WTC11 (cell line): ENCODE measurements at regions of chr5 and their contacts with region 1.

Region 1: GRCh38 chr5:76175051-76175666 is 92.0 kb downstream of the SV2C start:
- DNase-seq: peak; percentile 72
- ATAC-seq: peak; percentile 85
- H3K4me3 Mint-ChIP-seq: no peak overlapping the region
- H3K27ac Mint-ChIP-seq: no peak overlapping the region
- H3K4me1 Mint-ChIP-seq: peaks cover 14% of the 10 kb centered on the region
- H3K27me3 Mint-ChIP-seq: no peaks in the 10 kb centered on the region
- CTCF ChIP-seq: peak; percentile 55

Region 2: DNA sequence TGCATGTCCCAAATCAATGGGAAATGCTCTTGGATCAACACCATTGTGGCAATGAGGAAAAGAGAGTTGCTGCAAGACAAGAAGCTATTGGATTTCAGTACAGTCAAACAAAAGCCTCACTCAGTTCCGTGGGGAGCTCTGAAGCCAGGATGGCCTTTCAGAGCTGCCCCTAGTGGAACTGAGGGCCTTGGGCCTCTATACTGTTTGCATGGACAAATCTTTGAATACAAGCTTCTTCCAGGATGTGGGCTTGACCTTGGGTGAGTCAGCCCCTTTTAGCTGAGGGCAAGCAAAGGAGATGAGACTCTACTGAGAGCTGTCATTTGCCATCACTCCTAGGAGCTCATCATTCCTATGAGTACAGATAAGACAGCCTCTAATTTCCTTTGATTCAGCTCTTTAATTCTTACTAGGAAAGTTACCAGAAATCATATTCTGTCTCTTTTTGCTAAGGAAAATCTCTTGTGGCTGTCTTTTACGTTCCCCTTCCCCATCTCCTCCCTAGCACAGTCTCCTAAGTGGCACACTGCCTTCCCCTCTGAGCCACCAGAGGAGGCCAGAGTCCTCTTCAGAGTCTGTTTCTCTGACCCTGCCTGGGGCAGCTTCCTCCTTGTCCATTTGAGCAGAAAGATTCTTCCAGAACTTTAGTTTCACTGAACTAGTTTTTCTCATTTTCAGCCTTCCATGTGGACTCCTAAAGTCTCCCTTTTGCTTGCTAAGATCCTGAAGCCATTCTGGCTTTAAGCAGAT is 289.1 kb before region 1 on chr5:
- CTCF ChIA-PET with region 1: interaction called, 41 read pairs
- POLR2A ChIA-PET with region 1: no interaction called
- DNase-seq: peak; percentile 34
- ATAC-seq: peak; percentile 94
- H3K4me3 Mint-ChIP-seq: no peak overlapping the region
- H3K27ac Mint-ChIP-seq: 0 out of 2 replicates have a peak overlapping the region, but pooled peaks have one; percentile 2
- H3K4me1 Mint-ChIP-seq: 0 out of 2 replicates have a peak, but pooled peaks cover 4% of the 10 kb centered on the region
- H3K27me3 Mint-ChIP-seq: no peaks in the 10 kb centered on the region
- CTCF ChIP-seq: no peak

Region 3: DNA sequence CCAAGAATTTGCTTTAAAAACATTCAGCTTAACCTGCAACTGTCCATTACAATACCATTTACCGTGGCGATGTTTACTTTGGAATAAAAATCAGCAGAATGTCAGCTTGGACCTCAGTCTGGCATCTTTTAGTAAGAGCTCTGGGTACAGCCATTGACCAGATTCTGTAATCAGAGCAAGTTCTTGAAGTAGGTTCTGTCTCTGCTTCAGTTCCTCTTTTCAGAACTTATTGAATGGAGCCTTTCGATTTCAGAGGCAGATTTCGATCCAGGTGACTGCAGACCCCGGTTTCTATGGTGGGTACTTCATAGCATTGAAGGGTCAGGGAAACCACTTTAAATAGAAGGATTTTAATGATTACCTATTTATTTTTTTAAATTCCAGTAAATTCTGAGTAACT is 145.4 kb before region 1 on chr5:
- CTCF ChIA-PET with region 1: no interaction called
- POLR2A ChIA-PET with region 1: no interaction called
- DNase-seq: no peak
- ATAC-seq: no peak
- H3K4me3 Mint-ChIP-seq: no peak overlapping the region
- H3K27ac Mint-ChIP-seq: no peak overlapping the region
- H3K4me1 Mint-ChIP-seq: no peaks in the 10 kb centered on the region
- H3K27me3 Mint-ChIP-seq: no peaks in the 10 kb centered on the region
- CTCF ChIP-seq: no peak

Region 4: DNA sequence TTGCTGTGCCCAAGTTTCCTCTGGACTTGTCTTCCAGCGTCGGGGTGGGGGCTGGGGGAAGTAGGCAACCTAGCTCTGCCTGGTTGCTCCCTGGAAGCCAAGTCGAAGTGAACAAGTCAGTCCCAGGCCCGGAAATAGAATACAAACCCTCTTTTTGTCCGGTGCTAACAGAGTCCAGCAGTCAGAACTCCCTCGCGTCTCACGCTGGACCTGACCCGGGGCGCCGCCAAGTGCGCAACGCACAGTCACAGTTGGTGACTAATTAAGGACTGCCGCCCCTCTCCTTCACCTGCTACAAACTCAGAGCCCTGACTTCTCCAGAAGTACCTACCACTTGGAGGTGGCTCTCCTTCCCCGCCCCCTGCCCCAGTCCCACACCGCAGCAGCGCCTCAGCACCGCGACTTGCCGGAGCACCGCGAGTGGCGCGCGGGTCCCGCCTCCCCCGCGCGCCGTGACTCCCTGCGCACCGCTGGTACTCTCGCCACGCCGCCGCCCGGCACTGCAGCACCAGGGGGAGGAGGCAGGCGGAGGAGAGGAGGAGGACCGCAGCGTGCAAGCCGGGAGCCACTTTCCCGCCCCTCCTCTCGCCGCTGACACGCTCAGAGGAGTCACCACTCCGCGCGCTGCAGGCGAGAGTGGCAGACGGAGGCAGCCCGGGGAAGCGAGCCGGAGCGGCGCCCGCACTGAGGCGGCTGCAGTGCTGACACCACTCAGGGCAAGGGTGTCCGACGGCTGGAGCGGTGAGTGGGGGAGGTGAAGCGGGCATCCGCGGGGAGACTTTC is 92.2 kb before region 1 on chr5 and contains the start of gene SV2C:
- CTCF ChIA-PET with region 1: interaction called, 21 read pairs
- POLR2A ChIA-PET with region 1: no interaction called
- DNase-seq: peak; percentile 47
- ATAC-seq: peak; percentile 8
- H3K4me3 Mint-ChIP-seq: peak within 1 kb of the TSS; percentile 87
- H3K27ac Mint-ChIP-seq: no peak within 1 kb of the TSS
- H3K4me1 Mint-ChIP-seq: peaks cover 25% of the 10 kb centered on the region
- H3K27me3 Mint-ChIP-seq: peaks cover 92% of the 10 kb centered on the region
- CTCF ChIP-seq: no peak
- total RNA-seq, gene SV2C: 0.05 to 0.09 TPM (median 0.07 TPM) in 3 replicates

Region 5: GRCh38 chr5:76145945-76146344 is 29.2 kb before region 1 on chr5:
- CTCF ChIA-PET with region 1: interaction called, 60 read pairs
- POLR2A ChIA-PET with region 1: no interaction called
- DNase-seq: peak; percentile 50
- ATAC-seq: peak; percentile 86
- H3K4me3 Mint-ChIP-seq: no peak overlapping the region
- H3K27ac Mint-ChIP-seq: no peak overlapping the region
- H3K4me1 Mint-ChIP-seq: peaks cover 19% of the 10 kb centered on the region
- H3K27me3 Mint-ChIP-seq: peaks cover 30% of the 10 kb centered on the region
- CTCF ChIP-seq: no peak

Region 6: DNA sequence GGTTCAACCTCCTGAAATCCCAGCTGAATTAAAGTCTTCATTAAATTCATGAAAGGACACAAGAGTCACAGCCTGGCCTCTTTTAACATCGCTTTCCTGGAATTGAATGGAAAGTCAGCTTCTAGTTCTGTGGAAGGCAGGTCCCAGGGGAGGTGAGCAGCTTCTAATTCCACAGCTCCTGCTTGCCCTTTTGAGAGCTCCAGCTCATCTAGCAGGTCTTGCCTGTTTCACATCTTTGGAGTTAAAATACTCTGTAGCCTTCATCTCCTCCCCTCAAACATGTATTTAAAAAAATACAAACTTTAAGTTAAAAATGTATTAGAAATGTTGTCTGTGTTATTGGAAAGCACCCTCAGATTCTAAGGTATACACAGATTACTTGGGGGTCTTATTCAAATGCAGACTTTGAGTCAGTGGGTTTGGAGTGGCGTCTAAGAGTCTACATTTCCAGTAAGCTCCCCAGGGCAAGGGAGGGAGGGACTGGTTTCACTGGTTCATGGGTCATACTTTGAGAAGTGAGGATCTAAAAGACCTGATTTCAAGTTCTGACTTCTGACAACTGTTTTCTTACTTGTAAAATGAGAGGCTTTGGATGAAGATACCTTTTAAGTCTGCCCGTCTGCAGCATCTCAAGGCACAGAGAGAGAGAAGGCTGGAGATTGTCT is 16.8 kb after region 1 on chr5:
- CTCF ChIA-PET with region 1: interaction called, 25 read pairs
- POLR2A ChIA-PET with region 1: no interaction called
- DNase-seq: no peak
- ATAC-seq: no peak
- H3K4me3 Mint-ChIP-seq: no peak overlapping the region
- H3K27ac Mint-ChIP-seq: no peak overlapping the region
- H3K4me1 Mint-ChIP-seq: peaks cover 29% of the 10 kb centered on the region
- H3K27me3 Mint-ChIP-seq: no peaks in the 10 kb centered on the region
- CTCF ChIP-seq: no peak

Region 7: GRCh38 chr5:76204719-76205118 is 29.6 kb after region 1 on chr5:
- CTCF ChIA-PET with region 1: interaction called, 33 read pairs
- POLR2A ChIA-PET with region 1: no interaction called
- DNase-seq: no peak
- ATAC-seq: no peak
- H3K4me3 Mint-ChIP-seq: no peak overlapping the region
- H3K27ac Mint-ChIP-seq: no peak overlapping the region
- H3K4me1 Mint-ChIP-seq: peaks cover 11% of the 10 kb centered on the region
- H3K27me3 Mint-ChIP-seq: no peaks in the 10 kb centered on the region
- CTCF ChIP-seq: no peak